Right cardiac atrium (tissue), 5 donors: ENCODE measurements at regions of chr15 and their contacts with region 1.

Region 1: DNA sequence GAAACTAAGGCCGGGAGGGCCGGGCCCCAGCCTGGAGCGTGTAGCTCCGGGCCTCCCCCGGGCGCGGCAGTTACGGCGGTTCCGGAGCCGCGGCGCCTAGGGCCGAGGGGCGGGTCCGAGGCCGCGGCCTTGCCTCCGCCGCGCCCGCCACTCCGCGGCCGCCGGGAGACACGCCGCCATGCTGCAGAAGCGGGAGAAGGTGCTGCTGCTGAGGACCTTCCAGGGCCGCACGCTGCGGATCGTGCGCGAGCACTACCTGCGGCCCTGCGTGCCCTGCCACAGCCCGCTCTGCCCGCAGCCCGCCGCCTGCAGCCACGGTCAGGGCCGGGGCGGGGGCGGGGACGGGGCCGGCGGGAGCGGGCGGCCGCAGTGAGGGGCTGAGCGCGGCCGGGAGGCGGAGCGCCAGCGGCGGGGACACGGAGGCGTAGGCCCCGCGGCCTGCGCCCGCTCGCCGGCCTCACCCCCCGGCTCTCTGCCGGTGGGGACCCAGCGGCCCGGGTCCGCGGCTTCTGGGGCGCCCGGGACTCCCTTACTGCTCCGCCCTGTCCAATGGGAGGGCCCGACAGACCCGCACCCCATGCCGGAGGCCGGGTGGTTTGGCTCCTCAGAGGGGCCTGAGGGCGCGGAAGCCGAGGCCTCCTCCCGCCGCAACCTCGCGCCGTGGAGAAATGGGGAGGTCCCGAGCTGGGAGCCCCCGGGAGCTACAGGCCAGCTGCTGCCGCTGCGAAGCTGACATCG is at the start of gene DIS3L:
- DNase-seq: peak; percentile 71 to 88 (median 84)
- ATAC-seq: peak; percentile 94
- H3K4me3 ChIP-seq: peak within 1 kb of the TSS; percentile 98
- H3K27ac ChIP-seq: peak within 1 kb of the TSS; percentile 99
- H3K4me1 ChIP-seq: no peaks in the 10 kb centered on the region
- H3K27me3 ChIP-seq: no peaks in the 10 kb centered on the region
- total RNA-seq, gene DIS3L: 37.7 to 45.2 (median 42.6) TPM

Region 2: DNA sequence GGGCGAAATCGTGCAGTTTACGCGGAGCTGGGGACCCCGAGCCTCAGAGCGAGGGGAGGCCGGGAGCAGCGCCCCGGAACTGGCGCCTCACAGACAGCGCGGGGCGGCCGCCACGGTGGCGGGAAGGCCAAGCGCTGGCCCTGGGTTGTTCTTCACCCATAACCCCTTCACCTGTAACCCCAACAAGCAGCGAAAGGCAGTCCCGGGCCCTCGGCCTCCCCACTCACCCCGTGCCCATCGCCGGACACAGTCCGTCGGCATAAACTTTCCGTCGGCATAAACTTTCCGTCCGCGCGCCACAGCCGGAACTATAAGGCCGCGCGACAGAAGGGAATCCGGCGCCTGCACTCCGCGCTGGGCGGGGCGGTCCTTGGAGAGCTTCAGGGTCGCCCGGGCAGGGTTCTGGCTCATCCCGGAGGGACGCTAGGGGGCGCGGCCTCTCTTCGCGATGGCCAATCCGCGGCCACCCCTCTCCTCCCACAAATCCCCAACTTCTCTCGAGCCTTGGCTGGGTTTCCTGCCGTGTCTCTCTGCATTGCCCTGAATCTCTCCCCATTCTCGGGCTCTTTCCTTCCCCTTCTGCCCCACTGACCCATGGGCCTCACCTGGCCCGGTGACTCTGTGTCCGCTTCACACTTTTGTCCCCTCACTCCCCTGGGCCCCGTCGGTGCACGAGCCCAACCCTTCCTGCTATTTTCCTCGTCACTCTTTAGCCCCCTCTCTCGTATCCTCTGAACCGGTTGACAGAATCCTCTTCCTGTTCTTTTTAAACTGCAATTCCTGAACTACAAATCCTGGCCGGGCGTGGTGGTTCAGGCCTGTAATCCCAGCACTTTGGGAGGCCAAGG is 682.5 kb before region 1 on chr15 and contains the start of gene INTS14:
- intact Hi-C with region 1: loop called in 1 of 4 experiments (anchors 10 kb)
- DNase-seq: peak; percentile 99 to 100 (median 99)
- ATAC-seq: peak; percentile 99
- H3K4me3 ChIP-seq: peak within 1 kb of the TSS; percentile 87
- H3K27ac ChIP-seq: peak within 1 kb of the TSS; percentile 99
- H3K4me1 ChIP-seq: peaks cover 2% of the 10 kb centered on the region
- H3K27me3 ChIP-seq: no peaks in the 10 kb centered on the region
- total RNA-seq, gene INTS14: 15.2 to 22.8 (median 18.6) TPM

Region 3: GRCh38 chr15:65927545-65927944 is 366.0 kb before region 1 on chr15:
- intact Hi-C with region 1: no loop called
- DNase-seq: no peak
- ATAC-seq: no peak
- H3K4me3 ChIP-seq: no peak overlapping the region
- H3K27ac ChIP-seq: no peak overlapping the region
- H3K4me1 ChIP-seq: no peaks in the 10 kb centered on the region
- H3K27me3 ChIP-seq: no peaks in the 10 kb centered on the region

Region 4: DNA sequence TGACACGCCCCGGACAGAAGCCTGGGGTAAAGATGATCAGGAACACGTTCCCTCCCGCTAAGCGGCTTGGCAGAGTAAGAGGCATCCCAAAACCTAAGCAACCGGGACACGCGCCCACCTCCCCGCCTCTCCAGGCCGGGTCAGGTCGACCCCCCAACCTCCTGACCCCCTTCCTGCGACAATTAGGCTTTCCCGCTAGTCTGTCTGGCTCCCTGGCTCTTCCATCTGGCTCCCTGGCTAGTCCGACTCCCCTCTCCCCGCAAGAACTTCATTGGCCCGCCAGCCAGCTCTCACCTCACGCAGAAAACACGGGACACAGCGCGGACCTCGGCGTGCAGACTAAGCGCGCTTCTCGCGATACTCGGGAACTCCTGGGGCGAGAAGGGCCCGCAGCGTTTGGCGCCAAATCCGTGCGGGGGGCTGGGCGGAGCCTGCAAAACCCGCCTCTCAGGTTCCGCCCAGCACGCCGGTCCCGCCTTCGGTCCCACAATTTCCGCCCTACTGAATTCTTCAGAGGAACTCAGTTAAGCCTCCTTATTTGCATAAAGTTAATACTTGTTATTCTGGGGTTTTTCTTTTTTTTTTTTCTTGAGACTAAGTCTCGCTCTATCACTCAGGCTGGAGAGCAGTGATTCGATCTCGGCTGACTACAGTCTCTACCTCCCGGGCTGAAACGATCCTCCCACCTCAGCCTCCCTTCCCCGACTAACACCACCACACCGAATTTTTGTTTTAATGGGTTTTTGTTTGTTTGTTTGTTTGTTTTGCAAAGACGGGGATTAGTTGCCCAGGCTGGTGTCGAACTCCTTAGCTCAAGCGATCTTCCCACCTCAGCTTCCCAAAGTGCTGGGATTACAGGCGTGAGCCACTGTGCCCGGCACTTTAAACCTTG is 63.0 kb after region 1 on chr15 and contains the start of gene TIPIN:
- intact Hi-C with region 1: no loop called
- DNase-seq: peak; percentile 98 to 99 (median 98)
- ATAC-seq: peak; percentile 99 to 100
- H3K4me3 ChIP-seq: peak within 1 kb of the TSS; percentile 42
- H3K27ac ChIP-seq: peak within 1 kb of the TSS; percentile 20
- H3K4me1 ChIP-seq: no peaks in the 10 kb centered on the region
- H3K27me3 ChIP-seq: no peaks in the 10 kb centered on the region
- total RNA-seq, gene TIPIN: 3.2 to 7.4 (median 3.6) TPM